ENCODE measurements at regions of chr4 and their contacts with region 1.

Region 1: DNA sequence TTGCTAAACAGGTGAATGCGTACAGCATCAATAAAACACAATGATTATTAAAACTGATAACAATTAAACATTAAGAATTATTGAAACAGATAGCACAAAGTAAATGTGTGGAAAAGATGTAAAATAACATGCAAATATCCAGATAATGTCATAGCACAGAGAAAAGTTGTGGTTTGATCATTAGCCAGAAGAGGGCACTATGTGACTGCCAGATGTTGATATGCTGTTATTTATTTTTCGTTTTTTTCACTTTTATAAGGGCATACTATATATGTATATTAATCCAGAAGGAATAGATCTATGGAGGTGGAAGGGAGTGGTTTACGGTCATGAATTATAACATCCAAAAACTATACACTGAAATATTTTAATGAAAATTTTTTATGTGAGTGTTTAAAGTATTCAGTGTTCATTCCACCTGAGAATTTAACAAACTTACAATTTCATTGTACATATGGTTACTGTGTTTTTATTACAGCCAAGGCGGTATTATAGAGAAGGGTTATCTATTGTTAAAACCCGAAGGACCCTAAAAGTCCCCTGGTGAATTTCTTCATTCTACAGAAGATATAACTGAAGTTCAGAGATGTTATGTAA is 211.9 kb upstream of the UGT8 start:
- DNase-seq: peak; percentile 55
- ATAC-seq: peak; percentile 42
- H3K4me3 ChIP-seq: no peak overlapping the region
- H3K27ac ChIP-seq: no peak overlapping the region
- H3K4me1 ChIP-seq: peaks cover 13% of the 10 kb centered on the region
- H3K27me3 ChIP-seq: no peaks in the 10 kb centered on the region
- CTCF ChIP-seq: peak; percentile 71

Region 2: GRCh38 chr4:113278324-113278934 is 1108.3 kb before region 1 on chr4:
- CTCF ChIA-PET with region 1: no interaction called
- POLR2A ChIA-PET with region 1: no interaction called
- intact Hi-C with region 1: loop called (anchors 1 kb)
- DNase-seq: peak; percentile 74
- ATAC-seq: peak; percentile 88
- H3K4me3 ChIP-seq: no peak overlapping the region
- H3K27ac ChIP-seq: no peak overlapping the region
- H3K4me1 ChIP-seq: no peaks in the 10 kb centered on the region
- H3K27me3 ChIP-seq: no peaks in the 10 kb centered on the region
- CTCF ChIP-seq: peak; percentile 87

Region 3: DNA sequence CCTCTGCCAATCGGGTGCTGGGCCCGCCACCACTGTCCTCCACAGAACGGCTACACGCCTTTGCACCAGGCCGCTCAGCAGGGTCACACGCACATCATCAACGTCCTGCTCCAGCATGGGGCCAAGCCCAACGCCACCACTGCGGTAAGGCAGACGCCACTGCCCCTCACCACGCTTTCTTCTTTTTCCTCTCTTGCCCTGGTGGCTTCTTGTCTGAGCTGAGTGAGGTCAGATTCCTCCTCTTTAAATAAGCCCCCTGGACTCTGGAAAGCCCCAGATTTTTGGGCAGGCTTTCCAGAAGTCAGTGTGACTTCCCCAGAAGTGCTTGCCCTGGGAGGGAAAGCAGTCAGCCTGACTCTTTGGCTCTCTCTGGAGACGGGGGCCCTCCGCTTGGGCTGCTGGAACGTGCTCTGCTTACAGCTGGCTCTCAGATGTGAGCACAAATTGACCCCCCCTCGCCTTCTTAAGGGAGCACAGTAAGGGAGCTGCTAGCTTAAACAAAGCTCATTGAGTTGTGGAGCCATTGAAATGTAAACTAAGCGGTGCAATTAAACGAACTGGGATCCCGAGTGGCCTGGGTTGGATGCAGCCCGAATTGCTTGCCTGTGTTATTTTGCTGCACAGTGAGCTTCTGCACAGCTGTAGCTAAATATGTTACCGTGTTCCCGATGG is 1094.2 kb before region 1 on chr4:
- CTCF ChIA-PET with region 1: no interaction called
- POLR2A ChIA-PET with region 1: no interaction called
- intact Hi-C with region 1: loop called (anchors 5 kb)
- DNase-seq: no peak
- ATAC-seq: no peak
- H3K4me3 ChIP-seq: no peak overlapping the region
- H3K27ac ChIP-seq: no peak overlapping the region
- H3K4me1 ChIP-seq: no peaks in the 10 kb centered on the region
- H3K27me3 ChIP-seq: no peaks in the 10 kb centered on the region
- CTCF ChIP-seq: no peak

Region 4: DNA sequence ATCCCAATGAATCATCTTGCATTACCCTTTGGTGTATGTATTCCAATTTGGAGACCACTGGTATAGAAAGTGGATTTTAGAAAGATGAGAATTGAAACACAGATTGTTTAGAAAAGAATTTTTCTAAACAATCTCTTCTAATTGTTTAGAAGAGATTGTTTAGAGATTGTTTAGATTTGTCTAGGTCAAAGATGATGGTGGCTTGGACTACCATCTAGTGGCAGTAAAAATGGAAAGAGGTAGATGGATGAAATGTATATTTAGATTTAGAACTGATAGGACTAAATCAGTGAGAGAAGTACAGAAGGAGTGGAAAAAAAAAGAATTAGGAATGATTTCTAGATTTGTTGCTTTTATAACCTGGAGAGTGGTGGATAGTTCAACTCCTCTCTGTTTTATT is 477.9 kb before region 1 on chr4:
- CTCF ChIA-PET with region 1: no interaction called
- POLR2A ChIA-PET with region 1: no interaction called
- intact Hi-C with region 1: loop called (anchors 5 kb)
- DNase-seq: peak; percentile 6
- ATAC-seq: no peak; the same call in 1 of the 2 replicates
- H3K4me3 ChIP-seq: no peak overlapping the region
- H3K27ac ChIP-seq: no peak overlapping the region
- H3K4me1 ChIP-seq: no peaks in the 10 kb centered on the region
- H3K27me3 ChIP-seq: no peaks in the 10 kb centered on the region
- CTCF ChIP-seq: peak; percentile 49; the same call in 1 of the 2 replicates

Region 5: DNA sequence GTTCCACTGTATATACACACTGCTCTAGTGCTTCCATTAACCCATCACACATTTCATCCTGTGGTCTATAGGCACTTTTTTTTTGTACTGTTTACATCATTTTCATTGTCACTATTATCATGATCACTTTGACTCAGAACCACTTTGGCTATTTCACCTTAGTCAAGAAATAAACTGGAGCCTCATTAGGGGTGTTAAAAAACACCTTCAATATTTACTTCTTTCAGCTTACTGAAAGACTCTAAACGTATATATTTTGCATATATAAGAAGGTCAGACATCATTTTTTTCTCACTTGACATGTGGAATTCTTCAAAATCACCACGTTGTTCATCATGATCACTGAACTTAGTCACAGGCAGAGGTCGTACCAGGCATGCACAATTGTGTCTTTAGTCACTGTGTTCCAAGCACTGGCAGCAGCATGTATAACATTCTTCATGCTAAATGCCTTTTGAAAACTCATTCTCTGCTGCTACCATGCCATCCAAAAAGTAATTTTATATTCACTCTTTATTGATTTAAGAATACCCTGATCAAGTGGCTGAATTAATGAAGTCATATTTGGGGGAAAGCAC is 178.1 kb before region 1 on chr4:
- CTCF ChIA-PET with region 1: no interaction called
- POLR2A ChIA-PET with region 1: no interaction called
- intact Hi-C with region 1: no loop called
- DNase-seq: peak; percentile 12
- ATAC-seq: no peak
- H3K4me3 ChIP-seq: no peak overlapping the region
- H3K27ac ChIP-seq: no peak overlapping the region
- H3K4me1 ChIP-seq: no peaks in the 10 kb centered on the region
- H3K27me3 ChIP-seq: no peaks in the 10 kb centered on the region
- CTCF ChIP-seq: peak; percentile 27; the same call in 1 of the 2 replicates

Region 6: GRCh38 chr4:114694770-114695169 is 308.0 kb after region 1 on chr4:
- CTCF ChIA-PET with region 1: no interaction called
- POLR2A ChIA-PET with region 1: no interaction called
- intact Hi-C with region 1: loop called (anchors 1 kb)
- DNase-seq: peak; percentile 59
- ATAC-seq: no peak
- H3K4me3 ChIP-seq: no peak overlapping the region
- H3K27ac ChIP-seq: no peak overlapping the region
- H3K4me1 ChIP-seq: no peaks in the 10 kb centered on the region
- H3K27me3 ChIP-seq: no peaks in the 10 kb centered on the region
- CTCF ChIP-seq: peak; percentile 64

Region 7: GRCh38 chr4:114807759-114808404 is 421.1 kb after region 1 on chr4:
- CTCF ChIA-PET with region 1: no interaction called
- POLR2A ChIA-PET with region 1: no interaction called
- intact Hi-C with region 1: loop called (anchors 5 kb)
- DNase-seq: peak; percentile 61
- ATAC-seq: peak; percentile 75
- H3K4me3 ChIP-seq: peak overlapping the region; percentile 51; the same call in 1 of the 2 replicates
- H3K27ac ChIP-seq: no peak overlapping the region
- H3K4me1 ChIP-seq: no peaks in the 10 kb centered on the region; the same call in 1 of the 2 replicates
- H3K27me3 ChIP-seq: no peaks in the 10 kb centered on the region
- CTCF ChIP-seq: peak; percentile 83

Measured in PC-3 (cell line).